Right lobe of liver (tissue), 6 donors: ENCODE measurements at regions of chr1 and their contacts with region 1.

Region 1: GRCh38 chr1:165257969-165258459 is 98.5 kb downstream of the LMX1A start:
- DNase-seq: peak; percentile 76 to 91 (median 80)
- ATAC-seq: peak; percentile 72 to 81 (median 76)
- H3K4me3 ChIP-seq: no peak overlapping the region
- H3K27ac ChIP-seq: no peak overlapping the region
- H3K4me1 ChIP-seq: peaks cover 0 to 34% (median 12%) of the 10 kb centered on the region in 4 donors
- H3K27me3 ChIP-seq: no peaks in the 10 kb centered on the region
- CTCF ChIP-seq: peak; percentile 79 to 94 (median 82)
- POLR2A ChIP-seq: no peak

Region 2: GRCh38 chr1:164991763-164992314 is 266.2 kb before region 1 on chr1:
- intact Hi-C with region 1: no loop called
- DNase-seq: no peak
- ATAC-seq: no peak
- H3K4me3 ChIP-seq: no peak overlapping the region
- H3K27ac ChIP-seq: no peak overlapping the region
- H3K4me1 ChIP-seq: no peaks in the 10 kb centered on the region
- H3K27me3 ChIP-seq: no peaks in the 10 kb centered on the region
- CTCF ChIP-seq: no peak
- POLR2A ChIP-seq: no peak

Region 3: DNA sequence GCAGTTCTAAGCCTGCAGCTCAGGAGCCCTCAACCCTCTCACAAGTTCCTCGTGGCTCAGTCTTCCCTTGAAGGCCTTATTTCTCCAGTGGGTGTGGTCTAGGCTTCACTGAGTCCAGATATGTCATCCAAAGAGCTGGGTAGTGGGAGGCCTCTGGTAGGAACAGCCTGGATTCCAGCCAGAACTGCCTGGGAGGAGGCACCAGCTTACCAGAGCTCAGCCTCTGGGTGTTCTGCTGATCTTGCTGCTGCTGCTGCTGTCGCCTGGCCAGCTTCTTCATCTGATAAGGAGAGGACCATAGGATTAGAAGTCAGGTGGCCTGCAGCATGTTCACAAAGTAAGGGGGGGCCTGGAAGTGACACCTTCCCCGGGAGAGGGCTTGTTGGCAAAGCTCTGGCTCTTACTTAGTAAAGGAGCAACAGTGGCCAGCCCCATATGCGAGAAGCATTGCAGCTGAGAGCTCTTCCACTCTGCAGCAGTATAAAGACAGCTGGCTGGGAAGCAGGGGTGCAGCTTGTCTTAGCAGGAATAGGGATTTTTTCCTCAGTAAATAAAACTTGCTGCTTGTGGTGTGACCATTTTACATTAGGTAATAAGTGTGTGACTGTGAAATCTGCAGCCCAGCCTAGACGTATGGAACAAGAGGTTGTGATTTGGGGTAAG is 50.0 kb before region 1 on chr1:
- intact Hi-C with region 1: no loop called
- DNase-seq: no peak
- ATAC-seq: no peak
- H3K4me3 ChIP-seq: no peak overlapping the region
- H3K27ac ChIP-seq: no peak overlapping the region
- H3K4me1 ChIP-seq: no peaks in the 10 kb centered on the region
- H3K27me3 ChIP-seq: no peaks in the 10 kb centered on the region
- CTCF ChIP-seq: no peak
- POLR2A ChIP-seq: no peak

Region 4: DNA sequence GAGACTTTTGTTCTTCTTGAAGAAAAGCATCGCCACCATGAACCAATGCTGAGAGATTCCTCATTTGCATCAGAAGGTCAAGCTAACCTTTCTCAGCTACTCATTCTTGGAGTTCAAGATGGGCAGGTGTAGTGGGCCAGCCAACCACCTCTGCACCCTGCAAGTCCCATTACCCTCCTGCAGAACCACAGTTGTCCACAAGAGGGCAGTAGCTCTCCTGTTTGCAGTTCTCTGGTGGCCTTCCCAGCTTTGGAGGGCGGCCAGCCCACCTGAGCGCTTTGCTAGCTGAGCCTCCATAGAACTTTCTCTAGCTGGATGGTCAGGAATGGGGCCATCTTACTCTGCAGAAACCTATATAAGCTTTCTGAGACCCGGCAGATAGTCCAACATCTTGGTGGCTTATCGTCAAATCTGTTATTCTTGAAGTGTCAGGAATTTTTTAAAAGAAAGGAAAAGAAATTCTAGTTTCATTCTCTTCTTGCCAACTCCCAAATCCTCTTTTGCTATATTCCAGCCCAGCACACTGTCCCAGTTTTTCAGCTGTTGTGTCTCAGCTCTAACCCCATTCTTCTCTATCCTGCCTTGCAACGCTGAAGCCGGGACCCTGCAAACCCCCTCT is 109.5 kb after region 1 on chr1:
- intact Hi-C with region 1: loop called (anchors 10 kb)
- DNase-seq: peak; percentile 72 to 90 (median 75)
- ATAC-seq: peak; percentile 74 to 85 (median 83)
- H3K4me3 ChIP-seq: no peak overlapping the region
- H3K27ac ChIP-seq: no peak overlapping the region
- H3K4me1 ChIP-seq: no peaks in the 10 kb centered on the region
- H3K27me3 ChIP-seq: no peaks in the 10 kb centered on the region
- CTCF ChIP-seq: peak; percentile 78 to 98 (median 93)
- POLR2A ChIP-seq: no peak

Region 5: DNA sequence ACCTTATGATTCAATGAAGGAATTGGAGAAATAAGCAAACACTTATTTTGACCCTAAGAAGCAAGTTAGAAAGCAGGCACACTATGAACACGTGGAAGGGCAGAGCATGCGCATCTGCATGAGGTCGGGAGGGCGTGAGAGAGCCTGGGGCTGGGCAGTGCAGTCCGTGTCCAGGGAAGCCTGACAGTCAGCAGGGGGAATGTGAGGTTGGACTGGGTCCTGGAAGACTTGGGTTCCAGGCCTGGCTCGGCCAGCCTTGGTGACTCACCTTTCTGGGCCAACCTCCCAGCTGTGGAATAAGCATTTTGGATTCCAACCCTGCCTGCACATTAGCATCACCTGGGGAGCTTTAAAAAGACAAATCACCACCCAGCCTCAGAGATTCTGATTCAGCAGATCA is 125.1 kb after region 1 on chr1:
- intact Hi-C with region 1: no loop called
- DNase-seq: no peak
- ATAC-seq: peak in 1 of 4 donors; percentile 58
- H3K4me3 ChIP-seq: no peak overlapping the region
- H3K27ac ChIP-seq: no peak overlapping the region
- H3K4me1 ChIP-seq: no peaks in the 10 kb centered on the region
- H3K27me3 ChIP-seq: no peaks in the 10 kb centered on the region
- CTCF ChIP-seq: no peak
- POLR2A ChIP-seq: no peak